ENCODE measurements at regions of chr3 and their contacts with region 1.

Region 1: GRCh38 chr3:33260104-33260503 is 17.1 kb upstream of the FBXL2 start:
- DNase-seq: no peak
- H3K4me3 ChIP-seq: no peak overlapping the region
- CTCF ChIP-seq: no peak
- POLR2A ChIP-seq: no peak

Region 2: DNA sequence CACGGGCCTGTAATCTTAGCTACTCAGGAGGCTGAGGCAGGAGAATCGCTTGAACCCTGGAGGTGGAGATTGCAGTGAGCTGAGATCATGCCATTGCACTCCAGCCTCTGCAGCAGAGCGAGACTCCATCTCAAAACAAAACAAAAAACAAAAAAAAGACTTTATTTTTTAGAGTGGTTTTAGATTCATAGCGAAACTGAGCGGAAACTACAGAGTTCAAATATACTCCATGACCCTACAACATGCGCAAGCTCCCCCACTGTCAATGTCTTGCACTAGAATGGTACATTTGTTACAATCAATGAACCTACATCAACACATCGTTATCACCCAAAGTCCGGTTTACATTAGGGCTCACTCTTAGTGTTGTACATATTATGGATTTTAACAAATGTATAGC is 148.5 kb before region 1 on chr3:
- intact Hi-C with region 1: no loop called
- DNase-seq: no peak
- H3K4me3 ChIP-seq: no peak overlapping the region
- CTCF ChIP-seq: no peak
- POLR2A ChIP-seq: no peak

Region 3: DNA sequence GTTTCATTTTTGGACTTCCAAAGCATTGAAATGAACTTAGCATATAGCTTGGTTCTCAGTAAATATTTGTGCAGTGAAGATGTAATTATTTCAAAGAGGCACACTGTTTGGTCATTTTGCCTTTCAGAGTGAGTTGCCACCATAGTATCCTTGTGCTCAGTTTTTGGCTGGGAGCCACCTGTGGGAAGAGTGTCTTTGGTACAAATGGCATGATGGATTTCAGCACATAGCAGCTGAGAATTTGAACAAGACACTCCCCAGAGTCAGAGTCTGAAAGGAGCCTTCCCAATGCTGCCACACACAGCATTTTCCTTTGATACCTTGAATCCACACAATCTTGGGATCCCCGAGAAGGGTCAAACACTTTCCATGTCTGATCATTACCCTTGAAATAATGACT is 1482.0 kb after region 1 on chr3:
- intact Hi-C with region 1: loop called (anchors 5 kb)
- DNase-seq: no peak
- H3K4me3 ChIP-seq: no peak overlapping the region
- CTCF ChIP-seq: no peak
- POLR2A ChIP-seq: no peak